Adrenal gland (tissue), 19 donors: ENCODE measurements at regions of chr3 and their contacts with region 1.

Region 1: DNA sequence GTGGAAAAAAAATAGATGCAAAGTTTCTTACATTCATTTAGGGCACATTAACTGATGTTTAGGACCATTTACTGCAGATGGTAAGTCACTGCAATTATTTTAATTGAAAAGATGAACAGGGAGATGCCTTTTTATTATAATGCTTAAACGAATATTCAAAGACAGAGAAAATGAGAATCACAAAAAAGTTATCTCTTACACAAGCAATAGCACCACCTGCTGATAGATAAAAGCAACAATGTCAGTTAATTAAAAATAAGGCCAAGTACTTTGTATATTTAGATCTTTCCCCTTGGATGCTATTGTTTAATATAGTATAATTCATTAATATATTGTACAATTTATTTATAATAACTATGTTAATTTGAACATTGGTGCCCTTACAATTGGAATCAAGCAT is 55.9 kb downstream of the IFT80 start:
- DNase-seq: no peak
- H3K4me3 ChIP-seq: no peak overlapping the region
- H3K27ac ChIP-seq: no peak overlapping the region
- H3K4me1 ChIP-seq: no peaks in the 10 kb centered on the region
- H3K27me3 ChIP-seq: no peaks in the 10 kb centered on the region
- CTCF ChIP-seq: peak; percentile 18 to 61 (median 52)
- POLR2A ChIP-seq: no peak

Region 2: GRCh38 chr3:160038862-160039562 is 304.1 kb before region 1 on chr3:
- intact Hi-C with region 1: loop called (anchors 10 kb)
- DNase-seq: peak in 5 of 7 donors; percentile 22 to 39 (median 25)
- H3K4me3 ChIP-seq: peak overlapping the region in 1 of 4 donors; percentile 29
- H3K27ac ChIP-seq: no peak overlapping the region
- H3K4me1 ChIP-seq: no peaks in the 10 kb centered on the region
- H3K27me3 ChIP-seq: no peaks in the 10 kb centered on the region
- CTCF ChIP-seq: no peak
- POLR2A ChIP-seq: no peak

Region 3: GRCh38 chr3:160163229-160163878 is 179.8 kb before region 1 on chr3:
- intact Hi-C with region 1: loop called (anchors 5 to 10 kb)
- DNase-seq: no peak
- H3K4me3 ChIP-seq: no peak overlapping the region
- H3K27ac ChIP-seq: no peak overlapping the region
- H3K4me1 ChIP-seq: no peaks in the 10 kb centered on the region
- H3K27me3 ChIP-seq: no peaks in the 10 kb centered on the region
- CTCF ChIP-seq: peak; percentile 12 to 58 (median 46)
- POLR2A ChIP-seq: no peak

Region 4: DNA sequence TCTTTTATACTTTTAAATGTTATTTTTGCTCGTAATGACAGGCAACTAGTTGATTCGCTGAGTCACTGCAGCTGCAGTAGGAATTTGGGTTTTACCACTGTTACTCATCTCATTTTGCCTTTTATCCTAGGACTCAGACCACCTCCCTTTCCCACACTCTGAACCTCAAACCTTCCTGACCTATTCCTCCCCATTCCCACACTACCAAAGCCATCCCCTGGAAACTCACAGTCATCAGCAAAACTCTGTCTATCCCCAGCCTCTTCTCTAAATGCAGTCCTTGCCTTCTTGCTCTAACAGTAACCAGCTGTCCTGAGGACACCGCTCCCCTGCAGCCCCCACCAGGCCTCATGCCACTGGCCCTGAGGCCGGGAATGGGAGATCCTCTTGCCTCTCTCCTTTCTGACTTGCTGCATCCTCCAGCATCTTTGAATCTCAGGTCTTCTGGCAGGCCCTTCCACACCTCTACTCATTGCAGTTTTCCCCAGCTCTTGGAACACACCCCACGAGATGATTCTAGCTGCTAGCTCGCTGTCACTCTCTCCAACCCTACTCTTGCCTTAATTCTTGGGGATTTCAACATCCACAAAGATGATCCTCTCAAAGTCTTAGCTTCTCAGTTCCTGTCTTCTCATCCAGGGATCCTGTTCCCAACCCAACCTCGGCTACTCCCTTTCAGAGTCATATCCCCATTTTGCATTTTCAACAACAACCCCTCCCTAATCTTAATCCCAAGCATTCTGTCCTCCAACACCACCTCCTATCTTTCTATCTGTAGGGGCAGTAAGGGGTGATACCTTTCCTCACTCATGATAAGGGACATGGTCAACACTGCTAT is 173.8 kb before region 1 on chr3:
- intact Hi-C with region 1: loop called (anchors 5 to 10 kb)
- DNase-seq: no peak
- H3K4me3 ChIP-seq: no peak overlapping the region
- H3K27ac ChIP-seq: no peak overlapping the region
- H3K4me1 ChIP-seq: no peaks in the 10 kb centered on the region
- H3K27me3 ChIP-seq: no peaks in the 10 kb centered on the region
- CTCF ChIP-seq: no peak
- POLR2A ChIP-seq: no peak

Region 5: DNA sequence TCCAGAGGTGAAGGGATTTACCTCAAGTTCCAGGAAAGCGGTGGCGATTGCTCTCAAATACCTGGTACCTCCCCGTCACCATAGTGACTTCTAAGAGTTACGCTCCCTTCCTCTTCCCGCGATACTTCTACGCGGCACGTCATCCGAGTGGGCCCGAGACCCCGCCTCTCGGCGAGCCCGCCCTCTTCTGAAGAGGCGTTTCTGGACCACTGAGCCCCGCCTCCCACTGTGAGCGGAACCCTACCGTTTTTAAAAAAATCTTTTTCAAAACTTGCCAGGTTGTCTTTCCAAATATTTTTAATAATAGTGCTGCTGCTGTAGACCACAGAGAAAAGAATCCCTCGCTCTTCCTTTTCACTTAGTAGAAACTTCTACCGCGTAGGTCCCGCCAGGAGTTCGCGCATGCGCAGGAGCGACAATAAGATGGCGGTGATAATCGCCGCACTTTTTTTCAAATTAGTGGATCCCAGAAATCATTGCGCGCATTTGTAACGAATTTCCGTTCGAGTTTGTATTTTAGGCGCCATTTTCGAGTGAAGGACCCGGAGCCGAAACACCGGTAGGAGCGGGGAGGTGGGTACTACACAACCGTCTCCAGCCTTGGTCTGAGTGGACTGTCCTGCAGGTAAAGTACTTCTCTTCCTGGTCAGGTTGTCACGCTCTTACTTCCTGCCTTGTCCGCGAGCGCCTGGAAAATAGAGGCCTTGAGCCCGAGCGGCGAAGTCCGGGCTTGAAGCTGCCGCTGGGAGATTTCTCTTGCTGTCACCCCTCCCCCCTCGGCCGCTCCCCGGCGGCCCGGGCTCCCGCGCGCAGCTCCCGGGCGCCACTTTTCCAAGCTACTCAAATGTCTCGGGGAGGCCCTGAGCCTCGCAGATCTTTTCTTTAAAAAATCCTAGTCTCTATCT is 56.2 kb after region 1 on chr3 and contains the starts of genes IFT80 and SMC4:
- intact Hi-C with region 1: no loop called
- DNase-seq: peak; percentile 96 to 99 (median 97)
- H3K4me3 ChIP-seq: peak within 1 kb of the TSS; percentile 66 to 79 (median 72)
- H3K27ac ChIP-seq: peak within 1 kb of the TSS; percentile 79 to 90 (median 83)
- H3K4me1 ChIP-seq: peaks cover 0 to 9% of the 10 kb centered on the region in 2 donors
- H3K27me3 ChIP-seq: no peaks in the 10 kb centered on the region
- CTCF ChIP-seq: no peak
- POLR2A ChIP-seq: peak; percentile 38 to 88
- total RNA-seq, gene IFT80: 11.0 to 35.9 (median 20.3) TPM
- total RNA-seq, gene SMC4: 10.5 to 71.7 (median 20.0) TPM

Region 6: GRCh38 chr3:160417311-160417710 is 74.2 kb after region 1 on chr3:
- intact Hi-C with region 1: no loop called
- DNase-seq: no peak
- H3K4me3 ChIP-seq: no peak overlapping the region
- H3K27ac ChIP-seq: no peak overlapping the region
- H3K4me1 ChIP-seq: no peaks in the 10 kb centered on the region
- H3K27me3 ChIP-seq: no peaks in the 10 kb centered on the region
- CTCF ChIP-seq: no peak
- POLR2A ChIP-seq: no peak